Activated CD8-positive, alpha-beta memory T cell treated with anti-CD3 and anti-CD28 coated beads, Interleukin-2, amount 10 ng/mL, durations not matched to agents 7 days and 5 days (primary cell): ENCODE measurements at regions of chr4 and their contacts with region 1.

Region 1: GRCh38 chr4:109433205-109434006 is at the start of gene SEC24B:
- DNase-seq: peak; percentile 93
- ATAC-seq: peak; percentile 92
- H3K4me3 Mint-ChIP-seq: peak within 1 kb of the TSS; percentile 88
- H3K27ac Mint-ChIP-seq: peak within 1 kb of the TSS; percentile 84
- H3K4me1 Mint-ChIP-seq: peaks cover 53% of the 10 kb centered on the region
- H3K27me3 Mint-ChIP-seq: no peaks in the 10 kb centered on the region
- total RNA-seq, gene SEC24B: 22.0 to 25.9 TPM

Region 2: GRCh38 chr4:108738003-108738706 is 695.3 kb before region 1 on chr4:
- CTCF ChIA-PET with region 1: no interaction called
- DNase-seq: no peak
- ATAC-seq: no peak
- H3K4me3 Mint-ChIP-seq: no peak overlapping the region
- H3K27ac Mint-ChIP-seq: no peak overlapping the region
- H3K4me1 Mint-ChIP-seq: no peaks in the 10 kb centered on the region
- H3K27me3 Mint-ChIP-seq: peaks cover 15% of the 10 kb centered on the region

Region 3: DNA sequence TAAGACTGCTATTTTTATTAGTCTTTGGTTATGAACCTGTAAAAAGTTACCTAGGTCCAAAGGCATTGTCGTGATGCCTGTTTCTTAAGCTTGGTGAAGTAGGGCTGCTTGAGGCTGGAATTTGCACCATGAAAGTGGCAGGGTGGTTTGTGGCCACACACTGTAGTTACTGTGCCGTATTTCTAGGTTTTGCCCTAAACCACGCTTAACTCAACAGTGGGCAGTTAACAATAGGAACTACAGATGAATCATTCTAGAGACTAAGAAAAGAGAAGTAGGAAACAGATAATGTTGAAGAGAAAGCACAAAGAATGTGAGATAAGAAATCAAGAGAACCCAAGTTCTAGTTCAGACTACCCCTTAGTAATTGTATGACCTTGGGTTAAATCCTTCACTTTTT is 682.1 kb before region 1 on chr4:
- CTCF ChIA-PET with region 1: no interaction called
- DNase-seq: no peak
- ATAC-seq: no peak
- H3K4me3 Mint-ChIP-seq: no peak overlapping the region
- H3K27ac Mint-ChIP-seq: no peak overlapping the region
- H3K4me1 Mint-ChIP-seq: peaks cover 2% of the 10 kb centered on the region
- H3K27me3 Mint-ChIP-seq: peaks cover 26% of the 10 kb centered on the region

Region 4: GRCh38 chr4:109559983-109560686 is 126.7 kb after region 1 on chr4 and contains the start of gene MCUB:
- CTCF ChIA-PET with region 1: interaction called, 30 read pairs
- DNase-seq: peak; percentile 96
- ATAC-seq: peak; percentile 95
- H3K4me3 Mint-ChIP-seq: peak within 1 kb of the TSS; percentile 93
- H3K27ac Mint-ChIP-seq: peak within 1 kb of the TSS; percentile 96
- H3K4me1 Mint-ChIP-seq: peaks cover 43% of the 10 kb centered on the region
- H3K27me3 Mint-ChIP-seq: no peaks in the 10 kb centered on the region
- total RNA-seq, gene MCUB: 51.2 to 65.5 TPM

Region 5: GRCh38 chr4:109702950-109703663 is 269.7 kb after region 1 on chr4 and contains the start of gene CASP6:
- CTCF ChIA-PET with region 1: interaction called, 21 read pairs
- DNase-seq: peak; percentile 86
- ATAC-seq: peak; percentile 91
- H3K4me3 Mint-ChIP-seq: peak within 1 kb of the TSS; percentile 91
- H3K27ac Mint-ChIP-seq: peak within 1 kb of the TSS; percentile 89
- H3K4me1 Mint-ChIP-seq: peaks cover 33% of the 10 kb centered on the region
- H3K27me3 Mint-ChIP-seq: no peaks in the 10 kb centered on the region
- total RNA-seq, gene CASP6: 20.3 to 20.8 TPM

Region 6: GRCh38 chr4:109815151-109816081 is 382.0 kb after region 1 on chr4 and contains the start of gene GAR1:
- CTCF ChIA-PET with region 1: interaction called, 12 read pairs
- DNase-seq: peak; percentile 96
- ATAC-seq: peak; percentile 94
- H3K4me3 Mint-ChIP-seq: peak within 1 kb of the TSS; percentile 95
- H3K27ac Mint-ChIP-seq: peak within 1 kb of the TSS; percentile 98
- H3K4me1 Mint-ChIP-seq: peaks cover 58% of the 10 kb centered on the region
- H3K27me3 Mint-ChIP-seq: no peaks in the 10 kb centered on the region
- total RNA-seq, gene GAR1: 25.2 to 29.9 TPM

Region 7: GRCh38 chr4:109826719-109827118 is 393.3 kb after region 1 on chr4:
- CTCF ChIA-PET with region 1: interaction called, 22 read pairs
- DNase-seq: no peak
- ATAC-seq: peak; percentile 57
- H3K4me3 Mint-ChIP-seq: no peak overlapping the region
- H3K27ac Mint-ChIP-seq: no peak overlapping the region
- H3K4me1 Mint-ChIP-seq: peaks cover 4% of the 10 kb centered on the region
- H3K27me3 Mint-ChIP-seq: no peaks in the 10 kb centered on the region